ENCODE measurements at regions of chr10 and their contacts with region 1.

Region 1: GRCh38 chr10:88553116-88553752 is 29.9 kb downstream of the RNLS start:
- DNase-seq: peak; percentile 34 to 70
- H3K4me3 ChIP-seq: no peak overlapping the region
- H3K27ac ChIP-seq: no peak overlapping the region
- H3K4me1 ChIP-seq: peaks cover 0 to 7% (median 0%) of the 10 kb centered on the region in 4 donors
- H3K27me3 ChIP-seq: no peaks in the 10 kb centered on the region
- CTCF ChIP-seq: peak; percentile 69 to 77

Region 2: DNA sequence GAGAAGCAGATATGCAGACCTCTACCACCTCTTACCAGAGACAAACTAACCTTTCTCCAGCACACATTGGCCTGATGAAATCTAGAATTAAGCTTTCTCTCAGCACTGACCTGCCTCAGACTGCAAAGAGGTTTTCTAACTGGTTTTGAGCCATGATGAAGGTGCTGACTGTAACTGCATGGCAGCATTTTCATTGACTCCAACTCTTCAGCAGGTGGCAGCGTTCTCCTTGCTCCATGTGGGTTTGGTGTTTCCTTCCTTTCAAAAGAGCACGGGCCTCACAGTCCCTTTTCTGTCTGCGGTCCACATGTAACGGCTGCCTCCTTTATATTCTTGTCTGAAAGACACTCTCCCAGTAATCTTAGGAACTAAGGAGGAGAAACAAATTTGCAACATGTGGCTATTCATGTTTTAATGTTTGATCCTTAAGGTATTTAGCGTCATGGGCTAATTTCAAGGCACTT is 702.5 kb before region 1 on chr10:
- intact Hi-C with region 1: loop called (anchors 10 kb)
- DNase-seq: peak; percentile 57 to 68
- H3K4me3 ChIP-seq: no peak overlapping the region
- H3K27ac ChIP-seq: no peak overlapping the region
- H3K4me1 ChIP-seq: no peaks in the 10 kb centered on the region
- H3K27me3 ChIP-seq: no peaks in the 10 kb centered on the region
- CTCF ChIP-seq: peak; percentile 64 to 68

Region 3: DNA sequence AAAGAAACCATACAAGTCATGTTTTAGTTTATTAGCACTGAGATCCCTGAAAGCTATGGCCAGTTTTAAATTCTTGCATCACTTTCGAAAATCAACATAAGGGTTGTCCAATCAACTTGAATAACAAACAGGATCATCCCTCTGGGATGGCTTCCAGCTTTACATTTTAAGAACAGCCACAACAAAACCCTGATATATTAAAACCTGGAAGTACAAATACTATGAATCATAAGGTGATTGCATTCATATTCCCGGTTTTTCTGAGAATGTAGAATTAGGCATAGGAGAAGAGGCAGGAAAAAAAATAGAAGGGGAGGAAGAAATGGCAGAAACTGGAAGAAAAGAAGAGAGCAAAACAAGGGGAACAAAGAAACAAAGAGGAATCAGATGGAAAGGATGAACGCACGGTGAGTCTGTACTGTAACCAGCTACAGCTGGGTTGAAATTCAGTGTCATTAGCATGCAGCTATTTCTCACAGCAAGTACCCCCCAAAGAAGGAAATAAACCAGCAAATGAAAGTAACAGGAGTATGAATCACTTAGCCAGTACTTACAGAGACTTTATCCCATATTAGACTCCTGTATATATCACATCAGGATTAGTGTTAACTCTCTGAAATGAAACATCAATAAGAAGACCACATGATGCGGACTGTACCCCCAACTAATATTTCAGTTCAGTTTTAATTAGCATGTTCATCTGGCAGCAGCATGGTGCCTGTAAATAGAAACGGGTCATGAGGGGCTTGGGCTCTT is 271.5 kb before region 1 on chr10:
- intact Hi-C with region 1: no loop called
- DNase-seq: no peak
- H3K4me3 ChIP-seq: no peak overlapping the region
- H3K27ac ChIP-seq: no peak overlapping the region
- H3K4me1 ChIP-seq: peaks cover 0 to 11% (median 3%) of the 10 kb centered on the region in 4 donors
- H3K27me3 ChIP-seq: no peaks in the 10 kb centered on the region
- CTCF ChIP-seq: no peak

Region 4: GRCh38 chr10:88372051-88372715 is 181.1 kb before region 1 on chr10:
- intact Hi-C with region 1: no loop called
- DNase-seq: no peak
- H3K4me3 ChIP-seq: no peak overlapping the region
- H3K27ac ChIP-seq: no peak overlapping the region
- H3K4me1 ChIP-seq: no peaks in the 10 kb centered on the region
- H3K27me3 ChIP-seq: no peaks in the 10 kb centered on the region
- CTCF ChIP-seq: no peak

Region 5: DNA sequence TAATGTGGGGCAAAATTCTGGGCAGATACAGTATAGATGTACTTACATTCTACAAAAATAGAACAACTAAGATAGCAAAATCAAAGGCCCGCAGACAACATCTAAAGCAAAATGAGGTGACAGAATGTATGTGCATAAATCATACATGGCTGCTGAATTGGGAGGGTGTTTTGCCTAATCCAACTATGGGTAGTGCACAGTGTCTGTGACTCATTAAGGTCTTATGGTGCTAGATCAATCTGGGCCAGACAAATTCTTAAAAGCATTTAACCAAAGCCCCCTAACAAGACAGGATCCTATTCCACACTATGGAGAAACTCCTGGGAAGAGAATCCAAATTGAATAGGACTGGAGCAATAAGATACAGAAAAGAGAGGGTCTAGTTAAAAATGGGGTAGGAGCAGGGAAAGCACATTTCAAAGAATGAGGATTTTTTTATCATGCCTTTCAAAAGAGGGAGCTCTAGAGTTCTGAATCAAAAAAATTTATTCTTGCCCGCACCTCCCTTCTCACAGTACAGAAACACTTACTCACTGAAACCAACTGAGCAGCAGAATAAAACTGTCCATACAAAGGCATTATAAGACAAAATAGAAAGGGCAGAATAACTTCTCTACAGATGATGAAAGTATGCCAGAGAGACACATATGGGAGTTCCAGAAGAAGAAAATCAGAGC is 151.4 kb before region 1 on chr10:
- intact Hi-C with region 1: loop called (anchors 10 kb)
- DNase-seq: no peak
- H3K4me3 ChIP-seq: no peak overlapping the region
- H3K27ac ChIP-seq: no peak overlapping the region
- H3K4me1 ChIP-seq: no peaks in the 10 kb centered on the region
- H3K27me3 ChIP-seq: no peaks in the 10 kb centered on the region
- CTCF ChIP-seq: peak in 1 of 2 experiments; percentile 16

Region 6: DNA sequence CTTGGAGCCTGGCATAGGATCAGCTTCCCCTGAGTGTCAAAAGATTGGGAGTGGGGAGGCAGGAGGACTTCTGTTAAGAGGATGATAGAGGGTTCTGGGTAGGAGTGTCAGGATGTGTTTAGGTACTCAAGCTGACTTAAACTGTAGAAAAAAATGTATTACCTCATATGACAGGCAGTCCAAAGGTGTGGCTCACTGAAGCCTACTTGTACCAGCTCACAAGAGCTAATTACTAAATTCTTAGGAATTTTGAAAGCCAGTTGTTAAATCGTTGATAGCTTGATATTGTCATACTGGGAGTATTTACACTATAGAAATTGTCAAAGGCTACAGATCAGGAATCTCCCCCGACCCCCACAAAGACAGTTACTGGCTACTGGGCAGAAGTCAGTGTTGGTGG is 469.5 kb after region 1 on chr10:
- intact Hi-C with region 1: no loop called
- DNase-seq: no peak
- H3K4me3 ChIP-seq: no peak overlapping the region
- H3K27ac ChIP-seq: no peak overlapping the region
- H3K4me1 ChIP-seq: peaks cover 0 to 4% (median 2%) of the 10 kb centered on the region in 4 donors
- H3K27me3 ChIP-seq: no peaks in the 10 kb centered on the region
- CTCF ChIP-seq: no peak

Measured in tibial artery (tissue), 4 donors.